ENCODE measurements at regions of chr2 and their contacts with region 1.

Region 1: DNA sequence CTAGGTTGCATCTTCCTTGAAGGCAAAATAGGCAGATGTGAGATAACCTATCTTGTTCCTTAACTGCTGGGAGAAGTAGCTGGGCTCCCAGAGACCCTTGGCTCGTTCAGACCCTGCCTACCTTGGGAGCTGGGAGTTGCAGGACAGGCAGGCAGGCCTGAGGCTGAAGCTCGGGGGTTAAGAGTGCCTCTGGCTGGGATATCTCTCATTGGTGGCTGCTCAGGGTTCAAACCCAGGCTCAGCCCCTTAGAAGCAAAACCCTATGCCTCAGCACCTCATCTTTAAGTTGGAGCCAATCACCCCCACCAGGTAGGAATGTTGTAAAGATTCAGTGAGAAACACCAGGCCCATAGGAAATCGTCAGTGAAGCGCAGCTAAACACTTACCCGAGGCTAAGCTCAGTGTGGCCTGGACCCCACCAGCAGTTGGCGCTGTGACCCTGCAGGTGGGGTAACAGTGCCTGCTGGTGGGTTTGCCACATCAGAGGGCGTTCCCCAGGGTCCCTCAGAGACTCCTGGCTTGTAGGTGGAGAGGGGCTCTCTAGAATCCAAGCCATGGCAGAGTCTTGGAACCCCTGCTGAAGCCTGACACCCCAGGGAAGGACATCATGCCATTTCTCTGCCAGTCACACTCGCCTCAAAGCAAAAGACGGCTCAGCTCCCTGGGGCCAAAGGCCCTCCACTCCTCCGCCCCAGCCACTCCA is 54.6 kb upstream of the GPR17 start:
- DNase-seq: peak; percentile 83
- ATAC-seq: peak; percentile 99
- H3K4me3 Mint-ChIP-seq: no peak overlapping the region
- H3K27ac Mint-ChIP-seq: no peak overlapping the region
- H3K4me1 Mint-ChIP-seq: peaks cover 3% of the 10 kb centered on the region
- H3K27me3 Mint-ChIP-seq: no peaks in the 10 kb centered on the region
- CTCF ChIP-seq: peak; percentile 78

Region 2: DNA sequence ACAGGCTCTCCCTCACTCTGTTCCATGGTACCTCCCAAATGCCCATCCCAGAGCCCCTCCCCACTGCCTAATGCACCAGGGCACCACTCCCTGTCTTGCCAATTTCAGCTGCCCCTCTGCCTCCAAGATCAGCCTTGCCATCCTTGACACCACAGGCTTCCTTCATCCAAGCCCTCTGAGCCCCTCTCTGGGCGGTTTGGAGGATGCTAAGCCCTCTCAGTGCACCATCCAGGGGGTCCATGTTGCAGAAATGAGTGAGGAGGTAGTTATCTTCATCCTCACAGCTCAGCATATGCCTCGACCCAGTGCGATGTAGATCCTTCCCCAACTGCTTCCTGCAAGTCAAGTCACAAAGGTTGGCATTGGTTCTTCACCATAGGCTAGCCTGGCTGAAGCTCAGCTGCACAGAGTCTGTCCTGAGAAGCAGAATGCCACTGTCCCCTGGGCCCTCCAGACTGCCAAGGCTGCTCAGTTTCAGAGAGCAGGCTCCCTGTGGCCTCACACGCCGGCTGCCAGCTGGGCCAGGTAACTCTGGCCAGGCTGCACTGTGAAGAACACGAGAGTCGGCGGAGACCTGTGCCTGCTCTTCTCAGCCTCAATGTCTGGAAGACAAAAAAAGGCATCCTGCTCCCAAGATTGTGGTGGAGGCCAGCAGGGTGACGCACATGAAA is 193.7 kb before region 1 on chr2:
- CTCF ChIA-PET with region 1: no interaction called
- POLR2A ChIA-PET with region 1: no interaction called
- intact Hi-C with region 1: no loop called
- DNase-seq: no peak
- ATAC-seq: no peak
- H3K4me3 Mint-ChIP-seq: no peak overlapping the region
- H3K27ac Mint-ChIP-seq: no peak overlapping the region
- H3K4me1 Mint-ChIP-seq: peaks cover 23% of the 10 kb centered on the region
- H3K27me3 Mint-ChIP-seq: no peaks in the 10 kb centered on the region
- CTCF ChIP-seq: no peak

Region 3: DNA sequence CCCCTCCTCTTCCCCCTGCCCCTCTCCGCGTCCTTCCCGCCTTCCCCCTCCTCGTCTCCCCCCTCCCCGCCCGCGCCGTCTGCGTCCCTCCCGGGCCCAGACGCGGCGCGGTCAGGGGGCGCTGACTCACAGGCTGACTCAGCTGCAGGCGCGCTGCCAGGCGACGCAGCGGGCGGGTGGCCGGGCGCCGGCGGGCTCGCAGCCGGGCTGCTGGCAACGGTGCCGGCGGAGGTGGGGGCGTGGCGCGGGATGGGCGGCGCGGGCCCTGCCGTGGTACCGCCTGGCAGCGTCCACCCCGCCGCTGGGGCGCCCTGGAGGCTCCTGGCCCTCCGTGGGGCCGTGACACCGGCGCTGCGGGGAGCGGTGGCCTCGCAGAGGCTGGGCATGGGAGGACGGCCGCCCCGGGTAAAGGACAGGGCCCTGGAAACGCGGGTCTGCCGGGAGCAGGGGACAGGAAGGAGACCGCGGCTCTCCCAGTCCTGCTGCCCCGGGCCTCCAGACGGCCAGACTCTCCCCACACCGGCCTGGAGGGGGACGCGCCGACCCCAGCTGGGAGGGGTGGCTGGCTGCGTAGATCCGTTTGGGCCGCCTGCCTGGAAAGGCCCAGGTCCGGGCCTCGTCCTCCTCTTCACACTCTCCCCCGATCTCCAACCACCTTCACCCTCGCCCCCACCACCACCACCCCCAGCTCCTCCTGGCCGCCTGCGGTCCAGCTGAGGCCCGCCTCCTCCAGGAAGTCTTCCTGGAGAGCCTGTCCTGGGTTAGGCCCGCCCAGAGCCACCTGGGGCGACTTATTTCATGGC is 183.2 kb before region 1 on chr2:
- CTCF ChIA-PET with region 1: no interaction called
- POLR2A ChIA-PET with region 1: no interaction called
- intact Hi-C with region 1: no loop called
- DNase-seq: peak; percentile 89
- ATAC-seq: peak; percentile 89
- H3K4me3 Mint-ChIP-seq: peak overlapping the region; percentile 49
- H3K27ac Mint-ChIP-seq: peak overlapping the region; percentile 30
- H3K4me1 Mint-ChIP-seq: peaks cover 23% of the 10 kb centered on the region
- H3K27me3 Mint-ChIP-seq: peaks cover 4% of the 10 kb centered on the region
- CTCF ChIP-seq: no peak

Region 4: GRCh38 chr2:127576433-127577207 is 14.8 kb before region 1 on chr2:
- CTCF ChIA-PET with region 1: interaction called, 26 read pairs
- POLR2A ChIA-PET with region 1: no interaction called
- intact Hi-C with region 1: no loop called
- DNase-seq: no peak
- ATAC-seq: no peak
- H3K4me3 Mint-ChIP-seq: no peak overlapping the region
- H3K27ac Mint-ChIP-seq: no peak overlapping the region
- H3K4me1 Mint-ChIP-seq: peaks cover 15% of the 10 kb centered on the region
- H3K27me3 Mint-ChIP-seq: no peaks in the 10 kb centered on the region
- CTCF ChIP-seq: no peak

Region 5: GRCh38 chr2:127625081-127625943 is 33.9 kb after region 1 on chr2:
- CTCF ChIA-PET with region 1: interaction called, 6 read pairs
- POLR2A ChIA-PET with region 1: interaction called, 4 read pairs
- intact Hi-C with region 1: loop called (anchors 5 kb)
- DNase-seq: no peak
- ATAC-seq: no peak
- H3K4me3 Mint-ChIP-seq: no peak overlapping the region
- H3K27ac Mint-ChIP-seq: no peak overlapping the region
- H3K4me1 Mint-ChIP-seq: no peaks in the 10 kb centered on the region
- H3K27me3 Mint-ChIP-seq: no peaks in the 10 kb centered on the region
- CTCF ChIP-seq: no peak

Region 6: DNA sequence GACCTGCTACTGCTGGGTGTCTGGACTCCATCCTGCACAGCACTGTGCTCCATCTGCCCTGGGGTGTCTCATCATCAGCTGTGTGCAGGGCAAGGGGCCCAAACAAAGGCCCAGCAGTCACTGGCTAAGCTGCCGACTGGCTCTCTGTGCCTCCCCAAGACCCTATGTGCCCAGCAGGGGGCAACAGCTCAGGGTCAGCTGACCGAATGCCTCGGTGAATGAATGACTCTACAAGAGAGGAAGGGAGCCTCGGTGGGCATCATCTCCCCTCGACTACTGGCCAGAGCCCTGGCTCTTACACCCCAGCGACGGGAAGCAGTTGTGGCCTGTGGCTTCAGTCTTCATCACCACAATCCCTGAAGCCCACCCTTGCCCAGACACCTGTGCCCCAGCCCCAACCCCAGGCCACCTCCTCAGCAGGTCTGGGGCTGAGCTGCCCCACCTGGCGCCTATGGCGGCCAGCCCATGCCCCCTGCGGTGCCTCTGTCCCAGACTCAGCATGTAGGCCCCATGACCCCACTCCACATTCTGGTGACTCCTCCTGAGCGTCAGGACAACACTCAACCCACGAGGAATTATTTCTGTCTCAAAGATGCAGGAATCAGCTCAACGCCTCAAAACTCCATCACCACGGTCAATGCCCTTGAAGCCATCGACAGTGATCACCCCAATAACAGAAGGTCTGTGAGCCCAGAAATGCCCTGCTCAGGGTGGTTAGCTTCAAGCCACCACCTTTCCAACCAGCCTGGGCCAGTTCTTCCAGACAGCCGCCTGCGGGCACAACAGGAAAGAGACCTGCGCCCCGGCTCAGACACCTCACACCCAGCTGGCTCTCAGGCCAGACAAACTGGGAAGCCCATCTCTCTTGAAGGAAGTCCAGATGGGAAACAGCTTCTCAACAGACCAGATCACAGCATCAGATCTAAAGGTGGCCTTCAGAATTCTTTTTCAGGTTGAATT is 53.0 kb after region 1 on chr2:
- CTCF ChIA-PET with region 1: interaction called, 114 read pairs
- POLR2A ChIA-PET with region 1: interaction called, 5 read pairs
- intact Hi-C with region 1: loop called (anchors 1 kb)
- DNase-seq: no peak
- ATAC-seq: no peak
- H3K4me3 Mint-ChIP-seq: no peak overlapping the region
- H3K27ac Mint-ChIP-seq: no peak overlapping the region
- H3K4me1 Mint-ChIP-seq: peaks cover 22% of the 10 kb centered on the region
- H3K27me3 Mint-ChIP-seq: no peaks in the 10 kb centered on the region
- CTCF ChIP-seq: peak; percentile 12

Region 7: DNA sequence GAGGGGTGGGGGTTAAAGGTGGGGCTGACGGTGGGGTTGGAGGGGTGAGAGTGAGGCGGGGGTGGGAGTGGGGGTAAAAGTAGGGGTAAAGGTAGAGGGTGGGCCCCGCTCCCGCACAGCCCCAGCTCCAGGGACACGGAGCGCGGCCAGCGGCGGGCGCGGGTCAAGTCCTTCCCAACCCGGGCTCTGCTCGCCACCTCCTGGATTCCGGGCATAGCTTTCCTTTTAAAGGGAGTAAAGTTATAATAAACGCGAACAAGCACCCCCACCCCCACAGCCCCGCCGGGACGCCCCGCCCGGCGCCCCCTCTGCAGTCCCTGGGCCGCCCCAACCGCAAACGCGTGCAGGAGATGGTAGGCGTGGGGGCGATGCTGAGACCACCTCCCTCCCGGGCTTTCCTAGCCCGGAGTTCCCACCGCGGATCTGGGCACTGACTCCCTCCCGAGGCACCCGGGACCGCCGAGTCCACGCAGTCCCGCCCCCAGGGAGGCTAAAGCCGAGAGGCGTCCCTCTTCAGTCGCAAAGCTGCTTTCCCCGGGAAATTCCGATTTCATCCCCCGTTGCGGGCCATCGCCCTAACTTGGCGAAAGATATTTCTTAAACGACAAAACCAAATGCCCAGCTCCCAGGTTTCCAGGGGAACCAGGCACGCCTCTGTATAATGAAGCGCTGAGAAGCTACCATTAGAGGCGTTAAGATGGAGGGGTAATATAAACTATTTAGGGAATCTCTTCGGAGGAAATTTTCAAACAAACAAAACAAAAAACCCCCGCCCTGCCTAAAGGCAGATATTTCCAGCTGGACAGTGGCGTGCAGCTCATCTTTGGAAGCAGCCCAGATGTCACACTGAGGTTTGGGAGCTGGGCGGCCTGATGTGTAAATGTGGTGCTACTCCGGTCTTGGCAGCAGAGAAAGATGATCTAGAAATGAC is 84.2 kb after region 1 on chr2 and contains the start of gene LIMS2:
- CTCF ChIA-PET with region 1: interaction called, 18 read pairs
- POLR2A ChIA-PET with region 1: no interaction called
- intact Hi-C with region 1: no loop called
- DNase-seq: no peak
- ATAC-seq: no peak
- H3K4me3 Mint-ChIP-seq: peak within 1 kb of the TSS; percentile 57
- H3K27ac Mint-ChIP-seq: no peak within 1 kb of the TSS
- H3K4me1 Mint-ChIP-seq: peaks cover 6% of the 10 kb centered on the region
- H3K27me3 Mint-ChIP-seq: peaks cover 42% of the 10 kb centered on the region
- CTCF ChIP-seq: no peak
- total RNA-seq, gene LIMS2: 22.1 to 23.6 TPM

Region 8: DNA sequence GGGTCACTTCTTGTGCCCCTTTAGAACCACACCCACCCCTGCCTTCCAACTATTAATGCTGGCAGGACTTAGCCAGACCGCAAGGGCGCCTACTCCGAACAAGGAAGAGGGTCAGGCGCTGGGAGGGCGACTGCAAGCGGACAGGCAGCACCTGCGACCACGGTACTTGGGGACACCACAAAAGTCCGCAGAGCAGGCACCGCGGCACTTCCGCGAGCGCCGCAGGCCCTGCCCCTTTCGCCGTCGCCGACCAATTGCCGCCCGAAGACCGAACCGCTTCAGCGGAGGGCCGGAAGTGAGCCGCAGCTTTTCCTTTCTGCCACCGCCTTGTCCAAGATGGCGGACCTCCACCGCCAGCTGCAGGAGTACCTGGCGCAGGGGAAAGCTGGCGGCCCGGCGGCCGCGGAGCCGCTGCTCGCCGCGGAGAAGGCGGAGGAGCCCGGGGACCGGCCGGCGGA is 109.8 kb after region 1 on chr2 and contains the start of gene SFT2D3:
- CTCF ChIA-PET with region 1: interaction called, 33 read pairs
- POLR2A ChIA-PET with region 1: interaction called, 5 read pairs
- intact Hi-C with region 1: no loop called
- DNase-seq: peak; percentile 92
- ATAC-seq: peak; percentile 87
- H3K4me3 Mint-ChIP-seq: peak within 1 kb of the TSS; percentile 88
- H3K27ac Mint-ChIP-seq: peak within 1 kb of the TSS; percentile 95
- H3K4me1 Mint-ChIP-seq: peaks cover 34% of the 10 kb centered on the region
- H3K27me3 Mint-ChIP-seq: no peaks in the 10 kb centered on the region
- CTCF ChIP-seq: no peak
- total RNA-seq, gene SFT2D3: 3.9 to 4.4 TPM

Region 9: DNA sequence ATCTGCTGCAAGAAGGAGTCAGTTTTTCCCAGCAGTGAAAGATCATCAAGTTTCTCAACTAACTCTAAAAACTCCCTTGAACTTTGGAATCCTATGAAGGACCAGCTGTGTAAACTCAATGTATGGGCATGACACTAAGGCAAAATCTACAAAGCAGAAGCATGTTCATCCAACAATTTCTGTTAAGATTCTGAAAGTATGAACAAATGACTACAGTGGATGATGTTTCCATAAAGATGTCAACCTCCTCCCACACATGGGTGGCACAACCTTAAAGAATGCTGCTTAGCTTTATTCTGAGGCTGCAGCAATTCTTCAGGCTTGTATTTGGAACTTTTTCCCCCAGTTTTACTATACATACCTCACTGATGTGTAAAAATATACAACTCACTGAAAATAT is 172.4 kb after region 1 on chr2:
- CTCF ChIA-PET with region 1: no interaction called
- POLR2A ChIA-PET with region 1: no interaction called
- intact Hi-C with region 1: no loop called
- DNase-seq: no peak
- ATAC-seq: no peak
- H3K4me3 Mint-ChIP-seq: no peak overlapping the region
- H3K27ac Mint-ChIP-seq: no peak overlapping the region
- H3K4me1 Mint-ChIP-seq: peaks cover 20% of the 10 kb centered on the region
- H3K27me3 Mint-ChIP-seq: no peaks in the 10 kb centered on the region
- CTCF ChIP-seq: no peak